T-cell (primary cell): ENCODE measurements at regions of chr2 and their contacts with region 1.

Region 1: GRCh38 chr2:38602732-38603401 is at the start of gene HNRNPLL:
- DNase-seq: peak; percentile 81 to 94 (median 89)
- ATAC-seq: peak; percentile 85 to 89 (median 88)
- H3K4me3 ChIP-seq: peak within 1 kb of the TSS; percentile 85 to 86
- H3K4me3 Mint-ChIP-seq: peak within 1 kb of the TSS; percentile 88 to 94 (median 94)
- H3K27ac ChIP-seq: peak within 1 kb of the TSS; percentile 79
- H3K27ac Mint-ChIP-seq: peak within 1 kb of the TSS; percentile 90 to 92
- H3K4me1 ChIP-seq: peaks cover 19 to 22% of the 10 kb centered on the region in 2 experiments
- H3K4me1 Mint-ChIP-seq: peaks cover 45 to 53% (median 49%) of the 10 kb centered on the region in 3 donors
- H3K27me3 ChIP-seq: no peaks in the 10 kb centered on the region
- H3K27me3 Mint-ChIP-seq: no peaks in the 10 kb centered on the region
- total RNA-seq, gene HNRNPLL: 28.1 to 69.0 (median 35.2) TPM

Region 2: DNA sequence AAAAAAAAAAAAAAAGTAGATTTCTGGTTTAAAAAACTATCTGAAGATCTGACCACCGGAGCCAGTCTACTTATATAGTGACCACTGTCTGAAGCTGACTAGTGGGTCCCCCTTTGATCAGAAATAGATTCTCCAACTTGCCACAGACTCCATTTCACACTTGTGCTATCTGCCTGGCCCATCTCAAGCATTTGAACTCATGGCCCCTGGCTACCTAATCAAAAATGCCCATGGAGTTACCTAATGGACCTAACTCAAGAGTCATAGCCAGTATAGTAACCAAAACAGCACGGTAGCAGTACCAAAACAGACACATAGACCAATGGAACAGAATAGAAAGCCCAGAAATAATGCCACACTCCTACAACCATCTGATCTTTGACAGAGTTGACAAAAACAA is 208.8 kb before region 1 on chr2:
- CTCF ChIA-PET with region 1: no interaction called
- POLR2A ChIA-PET with region 1: no interaction called
- DNase-seq: no peak
- ATAC-seq: no peak
- H3K4me3 ChIP-seq: no peak overlapping the region
- H3K4me3 Mint-ChIP-seq: no peak overlapping the region
- H3K27ac ChIP-seq: no peak overlapping the region
- H3K27ac Mint-ChIP-seq: no peak overlapping the region
- H3K4me1 ChIP-seq: peaks cover under 1% of the 10 kb centered on the region in 2 experiments
- H3K4me1 Mint-ChIP-seq: peaks cover 3 to 15% (median 4%) of the 10 kb centered on the region in 3 donors
- H3K27me3 ChIP-seq: peaks cover 0 to 10% of the 10 kb centered on the region in 2 experiments
- H3K27me3 Mint-ChIP-seq: peaks cover 0 to 6% of the 10 kb centered on the region in 2 donors

Region 3: DNA sequence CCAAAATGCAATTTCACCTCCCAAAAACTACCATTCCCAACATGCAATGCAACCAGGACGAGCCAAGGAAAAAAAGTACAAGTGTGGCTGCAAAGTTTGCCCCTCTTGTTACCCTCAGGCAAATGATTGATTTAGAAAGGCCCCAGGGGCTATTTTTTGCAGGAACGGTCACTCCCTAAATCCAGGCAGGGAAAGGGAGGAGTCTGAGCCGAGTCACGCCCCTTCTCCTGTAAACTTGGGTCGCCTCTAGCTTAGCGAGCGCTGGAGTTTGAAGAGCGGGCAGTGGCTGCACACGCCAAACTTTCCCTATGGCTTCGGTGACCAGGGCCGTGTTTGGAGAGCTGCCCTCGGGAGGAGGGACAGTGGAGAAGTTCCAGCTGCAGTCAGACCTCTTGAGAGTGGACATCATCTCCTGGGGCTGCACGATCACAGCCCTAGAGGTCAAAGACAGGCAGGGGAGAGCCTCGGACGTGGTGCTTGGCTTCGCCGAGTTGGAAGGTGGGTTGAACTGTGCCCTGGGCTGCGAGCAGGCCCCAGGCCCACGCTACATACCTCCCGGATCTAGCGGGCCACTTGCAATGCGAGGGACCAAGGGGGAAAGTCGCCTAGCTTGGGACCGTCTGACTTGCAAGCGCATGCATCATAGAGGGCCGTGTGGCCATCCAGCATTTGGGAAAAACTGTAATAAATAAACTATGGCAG is 63.1 kb after region 1 on chr2 and contains the start of gene GALM:
- CTCF ChIA-PET with region 1: interaction called, 9 to 27 read pairs
- POLR2A ChIA-PET with region 1: interaction called, 3 to 4 read pairs
- DNase-seq: peak in 28 of 35 experiments; percentile 10 to 69 (median 33)
- ATAC-seq: peak; percentile 35 to 49 (median 46)
- H3K4me3 ChIP-seq: peak within 1 kb of the TSS; percentile 70 to 95
- H3K4me3 Mint-ChIP-seq: peak within 1 kb of the TSS; percentile 85 to 91 (median 90)
- H3K27ac ChIP-seq: peak within 1 kb of the TSS; percentile 79
- H3K27ac Mint-ChIP-seq: peak within 1 kb of the TSS; percentile 97 to 99
- H3K4me1 ChIP-seq: peaks cover 13 to 54% of the 10 kb centered on the region in 2 experiments
- H3K4me1 Mint-ChIP-seq: peaks cover 43 to 68% (median 55%) of the 10 kb centered on the region in 3 donors
- H3K27me3 ChIP-seq: no peaks in the 10 kb centered on the region
- H3K27me3 Mint-ChIP-seq: no peaks in the 10 kb centered on the region
- total RNA-seq, gene GALM: 14.3 to 29.4 (median 17.3) TPM